ENCODE measurements at regions of chr3 and their contacts with region 1.

Region 1: GRCh38 chr3:122101646-122102045 is 46.5 kb downstream of the CD86 start:
- DNase-seq: peak in 4 of 14 experiments; percentile 11 to 76 (median 74)
- ATAC-seq: no peak
- H3K4me3 ChIP-seq: no peak overlapping the region
- H3K4me3 Mint-ChIP-seq: no peak overlapping the region
- H3K27ac ChIP-seq: no peak overlapping the region
- H3K27ac Mint-ChIP-seq: no peak overlapping the region
- H3K4me1 ChIP-seq: peaks cover 4% of the 10 kb centered on the region
- H3K4me1 Mint-ChIP-seq: peaks cover 16% of the 10 kb centered on the region
- H3K27me3 ChIP-seq: no peaks in the 10 kb centered on the region
- H3K27me3 Mint-ChIP-seq: no peaks in the 10 kb centered on the region
- CTCF ChIP-seq: peak; percentile 41

Region 2: DNA sequence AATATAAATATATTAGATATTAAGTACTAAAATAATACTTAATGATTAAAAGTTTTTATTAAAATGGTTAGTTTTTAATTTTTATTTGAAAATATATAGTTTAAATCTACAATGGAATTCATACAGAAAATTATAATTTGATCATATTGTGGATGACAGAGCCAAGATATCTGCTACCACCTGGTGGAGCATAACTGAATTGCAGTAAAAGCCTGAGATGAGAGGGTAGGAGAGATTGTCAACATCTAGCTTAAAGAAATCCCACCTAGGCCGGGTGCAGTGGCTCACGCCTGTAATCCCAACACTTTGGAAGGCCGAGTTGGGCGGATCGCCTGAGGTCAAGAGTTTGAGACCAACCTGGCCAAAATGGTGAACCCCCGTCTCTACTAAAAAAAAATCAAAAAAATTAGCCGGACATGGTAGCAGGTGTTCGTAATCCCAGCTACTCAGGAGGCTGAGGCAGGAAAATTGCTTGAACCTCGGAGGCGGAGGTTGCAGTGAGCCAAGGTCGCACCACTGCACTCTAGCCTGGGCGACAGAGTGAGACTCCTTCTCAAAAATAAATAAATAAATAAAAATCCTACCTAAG is 198.3 kb after region 1 on chr3:
- CTCF ChIA-PET with region 1: interaction called, 12 read pairs
- POLR2A ChIA-PET with region 1: interaction called, 6 read pairs
- intact Hi-C with region 1: loop called (anchors 1 to 2 kb)
- DNase-seq: peak in 9 of 14 experiments; percentile 9 to 73 (median 30)
- ATAC-seq: peak; percentile 49
- H3K4me3 ChIP-seq: no peak overlapping the region
- H3K4me3 Mint-ChIP-seq: no peak overlapping the region
- H3K27ac ChIP-seq: no peak overlapping the region
- H3K27ac Mint-ChIP-seq: no peak overlapping the region
- H3K4me1 ChIP-seq: peaks cover 8% of the 10 kb centered on the region
- H3K4me1 Mint-ChIP-seq: peaks cover 8% of the 10 kb centered on the region
- H3K27me3 ChIP-seq: no peaks in the 10 kb centered on the region
- H3K27me3 Mint-ChIP-seq: no peaks in the 10 kb centered on the region
- CTCF ChIP-seq: peak; percentile 55

Region 3: GRCh38 chr3:122356415-122356814 is 254.8 kb after region 1 on chr3:
- CTCF ChIA-PET with region 1: no interaction called
- POLR2A ChIA-PET with region 1: no interaction called
- intact Hi-C with region 1: loop called (anchors 2 to 5 kb)
- DNase-seq: peak in 9 of 14 experiments; percentile 4 to 60 (median 11)
- ATAC-seq: no peak
- H3K4me3 ChIP-seq: no peak overlapping the region
- H3K4me3 Mint-ChIP-seq: no peak overlapping the region
- H3K27ac ChIP-seq: no peak overlapping the region
- H3K27ac Mint-ChIP-seq: no peak overlapping the region
- H3K4me1 ChIP-seq: no peaks in the 10 kb centered on the region
- H3K4me1 Mint-ChIP-seq: no peaks in the 10 kb centered on the region
- H3K27me3 ChIP-seq: no peaks in the 10 kb centered on the region
- H3K27me3 Mint-ChIP-seq: no peaks in the 10 kb centered on the region
- CTCF ChIP-seq: peak; percentile 9